ENCODE measurements at regions of chr7 and their contacts with region 1.

Region 1: DNA sequence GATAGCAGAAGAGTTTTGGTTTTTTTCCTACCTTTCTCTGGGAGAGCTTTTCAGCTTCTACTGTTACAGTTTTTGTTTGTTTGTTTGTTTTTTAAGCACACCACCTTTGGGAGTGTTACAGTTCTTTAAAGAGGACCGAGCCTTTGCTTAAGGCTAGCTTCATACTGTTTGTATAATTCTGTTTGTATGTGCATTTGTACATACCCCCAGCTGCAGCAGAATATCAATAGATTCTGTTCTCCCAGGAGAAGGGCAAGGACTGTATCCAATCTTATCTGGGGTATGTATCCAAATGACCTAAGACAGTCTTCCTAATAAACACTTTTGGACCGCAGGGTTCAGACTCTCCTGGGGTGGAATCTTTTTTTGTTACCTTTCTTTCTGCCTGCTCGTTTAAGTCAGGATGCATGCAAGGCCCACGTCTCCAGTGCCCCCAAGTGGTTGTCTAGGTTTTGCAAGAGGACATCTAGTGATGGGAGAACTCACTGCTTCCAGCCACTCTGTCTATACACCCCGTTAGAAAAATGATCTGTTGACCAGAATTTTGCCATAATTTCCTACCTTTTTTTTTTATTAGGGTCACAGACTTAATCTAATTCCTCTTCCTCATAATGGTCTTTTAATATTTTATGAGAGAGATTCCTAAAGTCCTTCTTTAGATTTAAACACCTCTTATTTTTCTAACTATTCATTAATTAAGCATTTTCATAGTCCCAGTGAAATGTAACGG is 23.9 kb downstream of the NRF1 start:
- DNase-seq: no peak
- ATAC-seq: peak; percentile 98
- H3K4me3 ChIP-seq: no peak overlapping the region
- H3K27ac ChIP-seq: no peak overlapping the region
- H3K4me1 ChIP-seq: peaks cover 6% of the 10 kb centered on the region; the same call in 1 of the 2 replicates
- H3K27me3 ChIP-seq: no peaks in the 10 kb centered on the region
- CTCF ChIP-seq: peak; percentile 94

Region 2: GRCh38 chr7:129597672-129598071 is 37.8 kb before region 1 on chr7:
- CTCF ChIA-PET with region 1: interaction called, 14 read pairs
- POLR2A ChIA-PET with region 1: no interaction called
- in situ Hi-C with region 1: no loop called
- intact Hi-C with region 1: no loop called
- DNase-seq: no peak
- ATAC-seq: no peak
- H3K4me3 ChIP-seq: no peak overlapping the region
- H3K27ac ChIP-seq: no peak overlapping the region
- H3K4me1 ChIP-seq: 0 out of 2 replicates have a peak, but pooled peaks cover 3% of the 10 kb centered on the region
- H3K27me3 ChIP-seq: no peaks in the 10 kb centered on the region
- CTCF ChIP-seq: no peak

Region 3: DNA sequence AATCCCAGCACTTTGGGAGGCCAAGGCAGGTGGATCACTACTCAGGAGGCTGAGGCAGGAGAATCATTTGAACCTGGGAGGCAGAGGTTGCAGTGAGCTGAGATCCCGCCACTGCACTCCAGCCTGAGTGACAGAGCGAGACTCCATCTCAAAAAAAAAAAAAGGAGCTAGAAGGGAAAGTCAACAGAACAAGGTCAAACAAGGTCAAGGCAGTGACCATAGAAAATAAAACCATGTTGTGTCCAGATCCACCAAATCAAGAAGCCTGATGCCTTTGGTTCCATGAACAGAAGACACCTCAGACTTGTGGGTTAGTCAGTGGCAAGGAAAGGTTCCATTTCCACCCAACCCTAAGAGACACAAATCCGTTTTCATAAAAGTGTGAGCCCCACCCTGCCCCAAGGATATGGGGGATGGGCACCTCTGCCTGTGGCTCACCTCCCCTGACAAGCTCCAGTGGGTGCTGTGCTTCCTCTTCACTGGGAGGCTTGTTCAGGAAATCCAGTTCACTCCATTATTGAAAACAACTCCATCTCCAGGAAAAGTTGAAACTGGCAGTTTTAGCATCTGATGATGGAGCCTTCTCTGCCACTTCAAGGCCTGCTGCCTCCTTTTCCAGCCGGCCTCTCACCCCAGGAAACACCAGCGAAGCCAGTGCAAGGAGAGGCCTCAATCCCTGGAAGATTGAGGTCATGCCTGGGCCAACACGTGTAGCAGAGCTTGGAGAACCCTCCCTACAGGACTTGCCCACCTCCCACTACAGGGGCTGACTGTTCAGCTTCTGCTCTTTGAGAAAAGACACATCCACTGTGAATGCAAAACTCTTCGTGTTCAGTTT is 129.0 kb after region 1 on chr7:
- CTCF ChIA-PET with region 1: no interaction called
- POLR2A ChIA-PET with region 1: interaction called, 16 read pairs
- in situ Hi-C with region 1: no loop called
- intact Hi-C with region 1: no loop called
- DNase-seq: no peak
- ATAC-seq: no peak
- H3K4me3 ChIP-seq: no peak overlapping the region
- H3K27ac ChIP-seq: no peak overlapping the region
- H3K4me1 ChIP-seq: no peaks in the 10 kb centered on the region
- H3K27me3 ChIP-seq: no peaks in the 10 kb centered on the region
- CTCF ChIP-seq: no peak

Region 4: GRCh38 chr7:130703851-130704250 is 1068.4 kb after region 1 on chr7:
- CTCF ChIA-PET with region 1: no interaction called
- POLR2A ChIA-PET with region 1: no interaction called
- in situ Hi-C with region 1: no loop called
- intact Hi-C with region 1: no loop called
- DNase-seq: no peak
- ATAC-seq: no peak
- H3K4me3 ChIP-seq: no peak overlapping the region
- H3K27ac ChIP-seq: no peak overlapping the region
- H3K4me1 ChIP-seq: no peaks in the 10 kb centered on the region
- H3K27me3 ChIP-seq: peaks cover 2% of the 10 kb centered on the region
- CTCF ChIP-seq: no peak

Measured in Panc1 (cell line).